PC-9 (cell line): ENCODE measurements at regions of chr6 and their contacts with region 1.

Region 1: GRCh38 chr6:92647625-92648024 is 771.7 kb downstream of the EPHA7 start:
- DNase-seq: peak in 1 of 2 experiments; percentile 24
- H3K4me3 ChIP-seq: no peak overlapping the region
- H3K27ac ChIP-seq: no peak overlapping the region
- H3K4me1 ChIP-seq: no peaks in the 10 kb centered on the region
- H3K27me3 ChIP-seq: no peaks in the 10 kb centered on the region
- CTCF ChIP-seq: no peak

Region 2: DNA sequence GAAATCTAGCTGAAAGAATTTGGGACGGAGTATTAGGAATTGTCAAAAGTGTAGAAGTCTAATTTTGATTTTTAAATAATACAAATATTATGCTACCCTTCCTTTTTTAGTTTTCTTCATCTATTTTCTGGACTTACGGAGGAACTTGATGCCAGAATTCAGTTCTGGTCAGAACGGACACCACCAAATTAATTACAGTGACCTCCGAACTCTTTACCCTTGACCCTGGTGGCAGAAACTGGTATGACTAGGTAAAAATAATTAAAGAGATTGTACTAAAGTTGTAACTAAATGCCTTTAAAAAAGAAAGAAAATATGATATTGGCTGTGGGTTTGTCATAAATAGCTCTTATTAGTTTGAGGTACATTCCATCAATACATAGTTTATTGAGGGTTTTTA is 1309.7 kb before region 1 on chr6:
- CTCF ChIA-PET with region 1: no interaction called
- POLR2A ChIA-PET with region 1: no interaction called
- intact Hi-C with region 1: loop called (anchors 10 kb)
- DNase-seq: no peak
- H3K4me3 ChIP-seq: no peak overlapping the region
- H3K27ac ChIP-seq: no peak overlapping the region
- H3K4me1 ChIP-seq: no peaks in the 10 kb centered on the region
- H3K27me3 ChIP-seq: no peaks in the 10 kb centered on the region
- CTCF ChIP-seq: peak; percentile 55

Region 3: DNA sequence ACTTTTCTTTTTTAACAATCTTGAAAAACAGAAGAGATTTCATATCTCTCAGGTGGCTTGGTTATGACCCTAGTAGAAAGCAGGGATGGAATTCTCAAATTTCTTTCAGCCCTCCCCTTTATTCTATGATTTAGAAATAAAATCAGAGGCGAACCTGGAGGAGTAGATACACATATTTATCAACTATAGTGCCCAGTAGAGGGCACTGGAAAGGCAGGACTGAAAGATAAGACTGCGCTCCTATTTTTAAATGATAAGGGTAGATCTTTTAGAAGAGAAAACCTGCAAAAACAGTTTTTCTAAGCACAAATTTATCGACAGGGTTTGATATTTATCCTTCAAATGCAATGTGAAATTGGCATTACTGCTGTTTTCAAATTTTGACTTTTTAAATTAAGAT is 524.9 kb before region 1 on chr6:
- CTCF ChIA-PET with region 1: no interaction called
- POLR2A ChIA-PET with region 1: no interaction called
- intact Hi-C with region 1: loop called (anchors 10 kb)
- DNase-seq: no peak
- H3K4me3 ChIP-seq: no peak overlapping the region
- H3K27ac ChIP-seq: no peak overlapping the region
- H3K4me1 ChIP-seq: 0 out of 2 replicates have a peak, but pooled peaks cover 12% of the 10 kb centered on the region
- H3K27me3 ChIP-seq: no peaks in the 10 kb centered on the region
- CTCF ChIP-seq: peak; percentile 51

Region 4: GRCh38 chr6:92415649-92416048 is 232.0 kb before region 1 on chr6:
- CTCF ChIA-PET with region 1: no interaction called
- POLR2A ChIA-PET with region 1: no interaction called
- intact Hi-C with region 1: no loop called
- DNase-seq: no peak
- H3K4me3 ChIP-seq: no peak overlapping the region
- H3K27ac ChIP-seq: no peak overlapping the region
- H3K4me1 ChIP-seq: no peaks in the 10 kb centered on the region
- H3K27me3 ChIP-seq: no peaks in the 10 kb centered on the region
- CTCF ChIP-seq: no peak

Region 5: DNA sequence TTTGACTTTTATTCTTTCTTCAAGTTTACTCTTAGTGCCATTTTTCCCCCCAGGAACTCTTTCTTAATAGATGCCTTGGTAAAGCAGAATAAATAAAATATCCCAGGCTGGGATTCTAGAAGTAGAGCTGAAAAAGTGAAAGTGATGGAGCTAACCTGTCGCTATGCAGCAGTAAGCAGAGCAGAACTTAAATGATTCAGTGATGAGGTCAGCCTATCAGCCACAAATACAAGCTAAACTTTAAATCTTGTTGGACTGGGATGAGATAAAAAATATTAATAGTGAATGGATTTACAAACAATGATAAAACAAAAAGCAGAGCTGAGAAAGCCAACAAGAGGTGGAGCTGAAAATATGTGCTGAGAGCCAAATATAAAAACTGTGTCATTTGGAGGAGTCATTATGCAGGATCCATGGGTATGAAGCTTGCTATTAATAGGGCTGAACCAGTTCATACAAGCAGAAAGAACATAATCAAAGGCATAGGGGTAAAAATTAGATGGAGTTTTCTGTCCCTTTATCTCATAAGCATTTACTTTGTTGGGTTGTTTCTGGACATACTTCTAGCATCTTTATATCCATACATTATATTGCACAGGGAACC is 106.1 kb before region 1 on chr6:
- CTCF ChIA-PET with region 1: no interaction called
- POLR2A ChIA-PET with region 1: no interaction called
- intact Hi-C with region 1: no loop called
- DNase-seq: no peak
- H3K4me3 ChIP-seq: no peak overlapping the region
- H3K27ac ChIP-seq: no peak overlapping the region
- H3K4me1 ChIP-seq: no peaks in the 10 kb centered on the region
- H3K27me3 ChIP-seq: no peaks in the 10 kb centered on the region
- CTCF ChIP-seq: no peak